ENCODE measurements at regions of chr3 and their contacts with region 1.

Region 1: GRCh38 chr3:11846281-11847034 is at the start of gene TAMM41:
- DNase-seq: peak; percentile 77 to 94 (median 89)
- ATAC-seq: peak; percentile 99
- H3K4me3 ChIP-seq: peak within 1 kb of the TSS; percentile 91 to 92
- H3K4me3 Mint-ChIP-seq: peak within 1 kb of the TSS; percentile 99
- H3K27ac ChIP-seq: peak within 1 kb of the TSS; percentile 80 to 88
- H3K27ac Mint-ChIP-seq: peak within 1 kb of the TSS; percentile 97
- H3K4me1 ChIP-seq: peaks cover 28% of the 10 kb centered on the region
- H3K4me1 Mint-ChIP-seq: peaks cover 52% of the 10 kb centered on the region
- H3K27me3 ChIP-seq: no peaks in the 10 kb centered on the region
- H3K27me3 Mint-ChIP-seq: no peaks in the 10 kb centered on the region
- CTCF ChIP-seq: peak; percentile 62
- total RNA-seq, gene TAMM41: 16.2 to 18.5 TPM

Region 2: DNA sequence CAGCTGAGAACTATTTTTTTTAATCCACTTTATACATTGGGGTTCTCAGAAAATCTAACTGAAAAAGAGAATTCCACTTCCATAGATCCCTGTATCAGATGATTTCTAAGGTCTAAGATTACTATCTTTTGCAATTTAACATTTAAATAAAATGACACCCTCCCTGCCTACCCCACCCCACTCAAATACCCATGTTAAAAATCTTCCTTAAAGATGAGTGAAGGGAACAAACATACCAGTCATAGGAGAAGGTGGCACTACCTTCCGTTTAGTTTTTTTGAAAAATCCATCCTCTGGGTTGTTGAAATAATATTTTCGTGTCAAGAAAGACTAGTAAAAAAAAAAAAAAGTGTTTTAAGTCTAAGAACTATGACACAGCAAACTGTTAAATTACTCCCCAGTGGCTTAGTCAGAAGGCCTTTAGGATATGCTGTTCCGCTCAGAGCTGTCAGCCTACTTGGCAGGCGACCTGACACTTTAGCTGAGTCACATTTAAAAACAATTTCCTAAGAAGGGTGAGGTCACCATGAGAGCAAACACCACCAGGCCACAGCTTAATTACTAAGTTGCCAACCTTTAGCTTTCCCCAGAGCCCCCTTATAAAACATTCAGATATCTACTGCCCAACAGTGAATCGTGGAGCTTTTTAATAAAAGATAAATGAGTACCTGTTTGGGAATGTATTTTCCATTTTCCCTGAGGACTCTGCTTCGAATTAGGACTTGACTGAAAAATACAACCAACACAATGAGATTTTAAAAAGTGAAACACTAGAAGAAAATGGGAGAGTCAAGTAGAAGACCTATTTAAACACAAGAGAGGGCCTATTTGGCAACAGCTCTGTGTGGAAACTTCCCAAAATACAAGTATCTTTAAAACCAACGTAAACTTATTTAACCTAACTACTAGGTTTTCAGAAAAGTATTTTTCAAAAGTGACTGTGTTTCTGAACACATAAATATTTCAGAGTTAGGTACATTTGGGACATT is 1869.4 kb before region 1 on chr3:
- CTCF ChIA-PET with region 1: no interaction called
- POLR2A ChIA-PET with region 1: no interaction called
- intact Hi-C with region 1: no loop called
- DNase-seq: peak in 1 of 9 experiments; percentile 29
- ATAC-seq: no peak
- H3K4me3 ChIP-seq: no peak overlapping the region
- H3K4me3 Mint-ChIP-seq: no peak overlapping the region
- H3K27ac ChIP-seq: no peak overlapping the region
- H3K27ac Mint-ChIP-seq: peak overlapping the region; percentile 11
- H3K4me1 ChIP-seq: no peaks in the 10 kb centered on the region
- H3K4me1 Mint-ChIP-seq: peaks cover 18% of the 10 kb centered on the region
- H3K27me3 ChIP-seq: no peaks in the 10 kb centered on the region
- H3K27me3 Mint-ChIP-seq: no peaks in the 10 kb centered on the region
- CTCF ChIP-seq: no peak

Region 3: GRCh38 chr3:11719406-11720230 is 126.8 kb before region 1 on chr3:
- CTCF ChIA-PET with region 1: no interaction called
- POLR2A ChIA-PET with region 1: no interaction called
- intact Hi-C with region 1: loop called in 1 of 2 experiments (anchors 2 kb)
- DNase-seq: peak; percentile 54 to 86 (median 79)
- ATAC-seq: peak; percentile 81
- H3K4me3 ChIP-seq: peak overlapping the region; percentile 68 to 73
- H3K4me3 Mint-ChIP-seq: peak overlapping the region; percentile 88
- H3K27ac ChIP-seq: peak overlapping the region in 1 of 2 experiments; percentile 56
- H3K27ac Mint-ChIP-seq: no peak overlapping the region
- H3K4me1 ChIP-seq: peaks cover 15% of the 10 kb centered on the region
- H3K4me1 Mint-ChIP-seq: peaks cover 24% of the 10 kb centered on the region
- H3K27me3 ChIP-seq: no peaks in the 10 kb centered on the region
- H3K27me3 Mint-ChIP-seq: peaks cover 8% of the 10 kb centered on the region
- CTCF ChIP-seq: no peak

Region 4: DNA sequence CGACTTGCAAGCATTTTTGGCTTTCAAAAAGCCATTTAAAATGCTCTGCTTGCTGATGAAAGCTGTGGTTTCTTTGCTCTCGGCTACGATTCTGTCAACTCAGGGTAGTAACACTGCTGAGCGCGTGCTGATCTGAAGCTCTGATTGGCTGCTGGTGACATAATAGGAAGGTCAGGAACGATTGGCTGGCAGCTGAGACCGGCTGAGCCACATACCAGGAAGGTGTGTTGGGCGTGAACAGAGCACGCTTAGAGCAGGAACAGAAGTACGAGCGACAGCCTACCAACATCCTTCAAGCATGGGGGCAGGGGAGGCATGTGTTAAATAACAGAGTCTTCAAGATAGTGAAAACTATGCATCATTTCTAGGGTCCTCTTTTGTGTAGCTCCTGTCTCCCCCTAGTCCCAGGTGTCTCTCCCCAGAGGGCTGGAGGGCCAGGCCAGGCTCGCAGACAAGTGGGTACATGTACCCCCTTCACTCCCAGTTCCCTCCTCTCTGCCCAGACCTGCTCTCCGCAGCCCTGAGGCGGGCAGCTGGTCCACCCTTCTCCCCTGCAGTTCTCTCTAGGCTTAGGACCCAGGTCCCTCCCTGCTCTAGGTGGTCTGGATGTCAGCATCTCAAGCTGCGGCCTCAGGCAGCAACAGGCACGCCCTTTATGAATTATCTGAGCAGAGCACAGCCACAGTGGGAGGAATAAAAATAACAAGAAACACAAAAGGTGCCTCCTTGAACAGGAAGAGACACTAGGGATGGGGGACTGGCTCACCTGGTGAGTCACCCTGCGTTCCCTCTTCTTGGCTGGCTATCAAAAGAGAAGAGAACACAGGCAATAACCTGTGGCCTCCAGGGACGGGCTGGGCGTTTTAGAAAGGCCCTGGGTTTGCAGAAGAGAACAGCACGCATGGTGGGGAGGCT is 75.7 kb before region 1 on chr3:
- CTCF ChIA-PET with region 1: no interaction called
- POLR2A ChIA-PET with region 1: no interaction called
- intact Hi-C with region 1: loop called in 1 of 2 experiments (anchors 1 kb)
- DNase-seq: peak; percentile 59 to 92 (median 74)
- ATAC-seq: peak; percentile 100
- H3K4me3 ChIP-seq: peak overlapping the region; percentile 8 to 14
- H3K4me3 Mint-ChIP-seq: peak overlapping the region; percentile 46
- H3K27ac ChIP-seq: peak overlapping the region; percentile 17 to 20
- H3K27ac Mint-ChIP-seq: peak overlapping the region; percentile 86
- H3K4me1 ChIP-seq: peaks cover 14% of the 10 kb centered on the region
- H3K4me1 Mint-ChIP-seq: peaks cover 19% of the 10 kb centered on the region
- H3K27me3 ChIP-seq: no peaks in the 10 kb centered on the region
- H3K27me3 Mint-ChIP-seq: no peaks in the 10 kb centered on the region
- CTCF ChIP-seq: no peak

Region 5: GRCh38 chr3:12556671-12557472 is 710.4 kb after region 1 on chr3 and contains the start of gene MKRN2:
- CTCF ChIA-PET with region 1: no interaction called
- POLR2A ChIA-PET with region 1: no interaction called
- intact Hi-C with region 1: loop called (anchors 2 to 5 kb)
- DNase-seq: peak; percentile 67 to 94 (median 83)
- ATAC-seq: peak; percentile 93
- H3K4me3 ChIP-seq: peak within 1 kb of the TSS; percentile 73 to 86
- H3K4me3 Mint-ChIP-seq: peak within 1 kb of the TSS; percentile 89
- H3K27ac ChIP-seq: peak within 1 kb of the TSS; percentile 86 to 92
- H3K27ac Mint-ChIP-seq: peak within 1 kb of the TSS; percentile 90
- H3K4me1 ChIP-seq: peaks cover 49% of the 10 kb centered on the region
- H3K4me1 Mint-ChIP-seq: peaks cover 60% of the 10 kb centered on the region
- H3K27me3 ChIP-seq: peaks cover 6 to 16% of the 10 kb centered on the region in 2 experiments
- H3K27me3 Mint-ChIP-seq: peaks cover 24% of the 10 kb centered on the region
- CTCF ChIP-seq: no peak
- total RNA-seq, gene MKRN2: 24.8 to 25.5 TPM